K562 (cell line): ENCODE measurements at regions of chr1 and their contacts with region 1.

Region 1: DNA sequence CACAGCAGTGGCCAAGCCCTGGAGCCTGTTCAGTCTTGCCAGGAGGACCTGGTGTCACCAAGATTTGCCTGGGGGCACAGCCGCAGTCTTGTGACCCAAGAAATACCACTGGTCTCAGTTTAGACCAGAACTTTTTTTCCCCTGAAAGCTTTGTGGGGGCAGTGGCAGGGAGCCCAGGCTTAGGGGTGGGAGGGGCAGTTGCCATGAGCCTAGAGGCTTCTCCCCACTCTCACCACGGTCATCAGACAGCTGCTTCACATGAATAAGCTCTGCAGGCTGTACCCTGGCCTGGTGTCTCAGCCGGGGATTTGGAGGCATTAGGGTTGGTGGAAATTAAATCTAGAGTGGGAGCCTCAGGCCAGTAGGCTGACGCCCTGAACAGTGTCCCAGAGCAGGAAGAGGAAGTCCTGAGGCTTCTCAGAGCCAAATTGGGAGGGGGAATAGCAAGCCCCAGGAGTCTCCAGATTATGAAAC is 73.7 kb downstream of the SLC16A1 start:
- DNase-seq: no peak
- ATAC-seq: peak; percentile 13
- H3K4me3 ChIP-seq: no peak overlapping the region
- H3K27ac ChIP-seq: peak overlapping the region; percentile 34; the same call in 2 of the 3 replicates
- H3K4me1 ChIP-seq: peaks cover 28 to 31% of the 10 kb centered on the region in 2 experiments
- H3K27me3 ChIP-seq: peaks cover 0 to 4% of the 10 kb centered on the region in 2 experiments; a peak in 1 of 5 replicates
- CTCF ChIP-seq: no peak
- EP300 ChIP-seq: no peak
- POLR2A ChIP-seq: no peak
- RAD21 ChIP-seq: no peak

Region 2: DNA sequence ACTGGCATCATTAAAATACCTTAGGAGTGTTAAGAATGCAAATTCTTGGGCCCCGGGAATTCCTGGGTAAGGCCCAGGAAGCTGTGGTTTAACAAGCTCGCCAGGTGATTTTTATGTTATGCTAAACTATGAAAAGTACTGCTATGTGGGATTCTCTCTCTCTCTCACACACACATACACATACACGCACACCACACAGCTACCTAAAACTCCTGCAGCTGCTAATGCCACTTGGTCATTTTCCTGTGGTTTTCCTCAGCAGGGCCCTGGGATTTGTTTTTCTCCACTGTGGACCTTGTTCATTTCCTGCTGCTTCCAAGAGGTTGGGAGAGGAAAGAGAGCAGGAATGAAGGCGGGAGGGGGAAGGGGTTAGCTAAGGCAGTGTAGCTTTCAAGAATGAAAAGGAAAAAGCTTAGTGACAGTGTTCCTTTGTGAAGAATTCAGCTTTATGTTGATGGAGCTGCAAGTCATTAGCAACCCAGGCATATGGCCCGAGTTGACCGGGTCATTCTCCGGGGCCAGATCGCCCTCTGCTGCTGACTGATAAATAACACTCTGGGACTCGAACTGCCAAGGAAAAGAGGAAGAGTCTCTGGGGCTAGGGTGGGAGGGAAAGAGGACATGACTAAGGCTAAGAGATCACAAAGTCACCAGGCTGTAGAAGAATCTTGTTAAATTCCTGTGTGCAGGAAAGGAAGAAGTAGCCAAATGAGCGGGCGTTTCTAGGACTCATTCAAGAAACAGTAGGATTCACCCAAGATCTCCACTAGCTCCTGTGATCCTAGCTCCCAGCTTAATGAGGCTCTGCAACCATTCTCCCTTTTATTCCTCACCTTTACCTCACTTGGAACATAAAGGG is 160.2 kb after region 1 on chr1:
- CTCF ChIA-PET with region 1: interaction called, 70 read pairs
- POLR2A ChIA-PET with region 1: interaction called, 5 read pairs
- in situ Hi-C with region 1: loop called (anchors 5 kb)
- intact Hi-C with region 1: loop called (anchors 1 kb)
- DNase-seq: peak; percentile 85 to 96 (median 90)
- ATAC-seq: peak; percentile 97
- H3K4me3 ChIP-seq: no peak overlapping the region
- H3K27ac ChIP-seq: peak overlapping the region; percentile 72
- H3K4me1 ChIP-seq: peaks cover 18 to 49% of the 10 kb centered on the region in 2 experiments
- H3K27me3 ChIP-seq: no peaks in the 10 kb centered on the region
- CTCF ChIP-seq: peak; percentile 90 to 98 (median 93)
- EP300 ChIP-seq: peak; percentile 73
- POLR2A ChIP-seq: no peak
- RAD21 ChIP-seq: peak; percentile 98